ENCODE measurements at regions of chr21 and their contacts with region 1.

Region 1: DNA sequence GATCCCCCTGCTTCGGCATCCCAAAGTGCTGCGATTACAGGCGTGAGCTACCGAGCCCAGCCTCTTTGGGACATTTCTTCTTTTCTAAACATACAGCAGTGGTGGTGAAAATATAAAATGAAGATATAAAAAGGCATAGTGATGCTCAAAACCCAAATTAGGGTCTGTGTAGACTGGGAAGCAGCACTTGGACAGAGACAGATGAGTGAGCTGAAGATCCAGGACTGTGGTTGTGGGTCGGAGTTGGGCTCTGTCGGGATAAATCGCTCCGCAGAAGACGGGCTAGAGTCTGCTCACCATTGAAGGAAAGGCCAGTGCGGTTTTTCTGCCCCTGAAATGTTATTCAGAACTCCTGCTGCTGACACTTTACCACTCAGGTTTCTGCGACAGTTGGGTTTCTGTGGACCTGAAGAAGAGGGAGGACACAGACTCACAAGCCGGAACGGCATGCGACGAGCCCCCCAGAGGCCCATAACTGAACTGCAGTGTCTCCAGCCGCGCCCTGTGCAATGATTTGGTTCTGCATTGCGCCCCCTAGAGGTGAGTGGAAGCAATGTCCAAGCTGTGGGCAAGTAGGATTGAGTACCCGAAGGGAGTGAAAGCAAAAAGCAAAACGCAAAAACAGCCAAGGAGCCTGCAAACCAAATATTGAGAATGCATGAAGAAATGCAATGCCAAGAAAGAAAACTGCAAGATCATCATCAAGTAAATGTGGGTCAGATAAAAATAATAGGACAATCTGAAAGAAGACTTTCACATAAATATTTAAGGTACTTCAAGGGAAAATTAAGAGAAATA is 66.6 kb downstream of the GABPA start:
- DNase-seq: peak; percentile 55 to 90
- ATAC-seq: peak; percentile 98 to 100
- H3K4me3 ChIP-seq: peak overlapping the region; percentile 18; the same call in 1 of the 3 replicates
- H3K27ac ChIP-seq: no peak overlapping the region
- H3K4me1 ChIP-seq: no peaks in the 10 kb centered on the region
- CTCF ChIP-seq: peak; percentile 78
- EP300 ChIP-seq: no peak
- POLR2A ChIP-seq: no peak
- RAD21 ChIP-seq: peak; percentile 45 to 48

Region 2: GRCh38 chr21:25790122-25790877 is 11.1 kb before region 1 on chr21:
- CTCF ChIA-PET with region 1: interaction called, 14 read pairs
- POLR2A ChIA-PET with region 1: no interaction called
- DNase-seq: peak; percentile 10 to 44
- ATAC-seq: peak; percentile 86
- H3K4me3 ChIP-seq: peak overlapping the region; percentile 36; the same call in 2 of the 3 replicates
- H3K27ac ChIP-seq: peak overlapping the region; percentile 50 to 62; a peak in 5 of 6 replicates
- H3K4me1 ChIP-seq: no peaks in the 10 kb centered on the region
- CTCF ChIP-seq: peak; percentile 13; the same call in 1 of the 3 replicates
- EP300 ChIP-seq: no peak
- POLR2A ChIP-seq: no peak
- RAD21 ChIP-seq: peak; percentile 26 to 32; a peak in 3 of 5 replicates

Region 3: DNA sequence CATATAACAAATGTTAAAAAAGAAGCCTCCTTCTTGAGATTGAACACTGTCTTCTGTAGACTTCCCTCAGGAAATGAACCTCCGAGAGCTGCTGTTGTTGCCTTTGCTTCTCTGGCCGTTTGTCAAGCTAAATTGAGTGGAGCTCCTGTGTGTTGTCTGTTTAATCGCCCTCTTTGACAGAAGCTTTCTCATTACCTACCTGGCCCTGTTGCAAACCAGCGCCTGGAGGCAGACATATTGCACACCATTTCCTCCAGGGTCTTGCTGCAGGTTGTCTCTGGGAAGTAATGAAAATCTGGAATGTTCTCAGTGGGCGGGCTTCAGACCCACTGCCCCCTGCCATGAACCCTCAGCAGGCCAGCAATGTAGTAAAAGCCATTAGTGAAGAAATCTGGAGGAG is 16.7 kb after region 1 on chr21:
- CTCF ChIA-PET with region 1: interaction called, 18 read pairs
- POLR2A ChIA-PET with region 1: no interaction called
- DNase-seq: no peak
- ATAC-seq: no peak
- H3K4me3 ChIP-seq: no peak overlapping the region
- H3K27ac ChIP-seq: no peak overlapping the region
- H3K4me1 ChIP-seq: no peaks in the 10 kb centered on the region
- CTCF ChIP-seq: no peak
- EP300 ChIP-seq: no peak
- POLR2A ChIP-seq: no peak
- RAD21 ChIP-seq: no peak